GM10248 (cell line): ENCODE measurements at regions of chr3 and their contacts with region 1.

Region 1: GRCh38 chr3:23810343-23811184 is 4.8 kb downstream of the UBE2E1 start:
- DNase-seq: peak; percentile 66
- CTCF ChIP-seq: peak; percentile 32

Region 2: DNA sequence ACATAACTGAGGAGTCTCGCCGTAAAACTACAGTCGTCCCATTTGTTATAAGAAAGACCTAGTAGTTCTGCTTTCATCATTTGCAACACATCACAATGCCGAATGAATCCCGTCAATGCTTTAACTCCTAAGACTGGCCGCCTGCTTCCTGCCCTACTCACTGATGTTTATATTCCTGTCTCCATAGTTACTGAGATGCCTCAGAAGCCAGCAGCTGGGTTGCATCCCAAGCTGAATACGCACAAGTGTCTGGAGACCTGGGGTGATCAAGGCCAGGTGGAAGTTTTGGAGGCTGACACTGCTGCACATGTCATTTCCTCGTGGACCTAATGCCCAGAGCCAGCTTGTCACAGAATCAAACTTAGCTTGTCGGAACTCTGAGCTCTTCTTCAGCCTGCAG is 100.0 kb before region 1 on chr3:
- CTCF ChIA-PET with region 1: no interaction called
- POLR2A ChIA-PET with region 1: no interaction called
- DNase-seq: no peak
- CTCF ChIP-seq: no peak

Region 3: DNA sequence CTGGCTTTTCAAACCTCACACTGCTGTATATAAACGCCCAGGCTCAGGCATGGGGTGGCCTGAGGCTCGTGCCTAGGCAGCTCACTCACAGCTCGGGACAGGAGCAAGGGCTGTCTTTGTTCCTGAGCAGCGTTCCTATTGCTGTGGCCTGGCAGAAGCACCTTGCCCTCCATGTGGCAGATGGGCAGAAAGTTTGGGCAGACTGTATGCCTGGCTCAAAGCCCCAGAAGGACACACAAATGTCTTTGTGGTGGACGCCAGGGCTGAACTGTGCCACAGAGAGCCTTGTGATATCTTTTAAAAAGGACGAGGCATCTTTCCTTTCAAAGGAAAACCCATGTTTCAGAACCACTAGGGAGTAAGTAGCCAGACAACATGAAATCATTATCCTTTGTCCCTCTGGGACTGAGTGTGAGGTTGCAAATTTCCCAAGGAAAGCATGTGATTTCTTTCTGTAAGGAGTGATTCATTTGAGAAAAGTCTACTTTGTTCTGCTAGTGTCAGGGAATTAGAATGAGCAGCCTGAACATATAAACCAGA is 34.1 kb before region 1 on chr3:
- CTCF ChIA-PET with region 1: no interaction called
- POLR2A ChIA-PET with region 1: no interaction called
- DNase-seq: no peak
- CTCF ChIP-seq: no peak

Region 4: GRCh38 chr3:23826382-23827064 is 16.0 kb after region 1 on chr3:
- CTCF ChIA-PET with region 1: interaction called, 18 read pairs
- POLR2A ChIA-PET with region 1: interaction called, 6 read pairs
- DNase-seq: no peak
- CTCF ChIP-seq: no peak